SK-N-SH (cell line): ENCODE measurements at regions of chr13 and their contacts with region 1.

Region 1: DNA sequence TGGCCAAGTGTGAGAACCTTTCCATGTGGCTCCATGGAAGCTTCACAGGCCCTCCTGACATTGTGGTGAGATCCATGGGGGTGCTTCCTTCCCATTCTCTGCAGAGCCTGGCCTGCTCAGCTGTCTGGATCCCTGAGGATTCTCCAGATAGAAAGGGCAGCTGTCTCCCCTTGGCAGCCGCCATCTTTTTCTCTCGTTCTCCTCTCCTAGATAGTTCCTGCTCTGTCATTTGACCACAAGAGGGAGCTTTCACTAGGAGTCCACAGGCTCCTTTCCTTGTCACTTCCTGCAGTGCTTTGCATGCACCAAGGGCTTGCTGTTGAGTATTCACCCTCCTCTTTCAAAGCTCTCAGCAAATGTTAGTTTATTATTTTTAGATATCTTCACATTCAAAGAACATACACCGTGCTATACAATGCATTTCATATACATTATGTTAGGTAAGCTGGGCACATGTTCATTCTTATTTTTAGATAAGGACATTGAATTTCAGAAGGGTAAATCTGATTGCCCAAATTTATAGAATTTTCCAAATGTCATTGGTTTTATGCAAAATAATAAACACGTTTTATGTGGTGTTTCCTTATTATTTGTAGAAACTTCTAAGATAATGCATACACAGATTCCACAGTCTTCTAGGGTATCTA is 133.2 kb downstream of the FRY start:
- DNase-seq: peak; percentile 46
- H3K4me3 ChIP-seq: no peak overlapping the region; a peak in 1 of 4 replicates
- H3K27ac ChIP-seq: no peak overlapping the region; a peak in 1 of 4 replicates
- H3K4me1 ChIP-seq: peaks cover 0 to 7% of the 10 kb centered on the region in 2 experiments; a peak in 2 of 4 replicates
- H3K27me3 ChIP-seq: no peaks in the 10 kb centered on the region
- CTCF ChIP-seq: peak; percentile 76
- EP300 ChIP-seq: no peak
- RAD21 ChIP-seq: peak; percentile 60

Region 2: DNA sequence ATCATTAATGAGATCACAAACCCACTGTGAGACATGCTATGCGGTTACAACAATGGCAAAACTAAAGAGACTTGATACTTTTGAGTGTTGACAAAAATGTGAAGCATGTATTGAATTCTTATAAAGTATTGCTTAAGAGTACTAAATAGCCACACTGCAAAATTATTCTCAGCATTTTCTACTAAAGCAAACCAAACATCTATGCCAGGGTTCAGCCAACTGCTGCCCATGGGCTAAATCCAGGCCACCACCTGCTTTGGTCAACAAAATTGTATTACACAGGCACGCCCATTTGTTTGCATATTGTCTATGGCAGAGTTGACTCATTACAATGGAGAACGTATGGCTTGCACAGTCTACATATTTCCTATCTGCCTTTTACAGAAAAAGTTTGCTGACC is 829.6 kb before region 1 on chr13:
- CTCF ChIA-PET with region 1: no interaction called
- POLR2A ChIA-PET with region 1: no interaction called
- DNase-seq: no peak
- H3K4me3 ChIP-seq: no peak overlapping the region
- H3K27ac ChIP-seq: no peak overlapping the region
- H3K4me1 ChIP-seq: no peaks in the 10 kb centered on the region
- H3K27me3 ChIP-seq: no peaks in the 10 kb centered on the region
- CTCF ChIP-seq: no peak
- EP300 ChIP-seq: no peak
- RAD21 ChIP-seq: no peak

Region 3: GRCh38 chr13:32175307-32175706 is 10.6 kb after region 1 on chr13:
- CTCF ChIA-PET with region 1: interaction called, 21 read pairs
- POLR2A ChIA-PET with region 1: no interaction called
- DNase-seq: no peak
- H3K4me3 ChIP-seq: no peak overlapping the region
- H3K27ac ChIP-seq: no peak overlapping the region
- H3K4me1 ChIP-seq: peaks cover 0 to 4% of the 10 kb centered on the region in 2 experiments; a peak in 2 of 4 replicates
- H3K27me3 ChIP-seq: no peaks in the 10 kb centered on the region
- CTCF ChIP-seq: no peak
- EP300 ChIP-seq: no peak
- RAD21 ChIP-seq: no peak